Activated naive CD4-positive, alpha-beta T cell treated with anti-CD3 and anti-CD28 coated beads for 36 hours (primary cell): ENCODE measurements at regions of chr1 and their contacts with region 1.

Region 1: GRCh38 chr1:231612393-231613089 is 14.0 kb upstream of the DISC1 start:
- DNase-seq: peak; percentile 82
- H3K4me3 Mint-ChIP-seq: peak overlapping the region; percentile 41
- H3K27ac Mint-ChIP-seq: peak overlapping the region; percentile 83
- H3K4me1 Mint-ChIP-seq: peaks cover 46% of the 10 kb centered on the region
- H3K27me3 Mint-ChIP-seq: no peaks in the 10 kb centered on the region

Region 2: DNA sequence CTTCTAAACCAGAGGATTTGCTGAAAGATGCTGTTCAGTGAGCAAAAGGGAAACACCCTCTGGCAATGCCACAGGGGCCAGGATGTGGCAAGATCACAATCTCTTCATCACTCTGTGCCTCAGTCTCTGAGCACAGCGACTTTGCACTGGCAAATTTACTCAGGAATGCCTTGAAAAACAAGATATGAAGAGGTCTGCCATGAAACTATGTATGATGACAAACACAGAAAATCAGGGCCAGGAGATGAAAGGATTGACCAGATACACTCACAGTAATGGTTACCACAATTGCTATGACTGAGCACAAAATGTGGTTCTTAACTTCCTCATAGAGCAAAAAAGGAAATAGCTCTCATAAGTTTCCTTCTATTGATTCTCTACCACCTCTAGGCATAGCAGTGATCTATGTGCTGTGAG is 639.7 kb before region 1 on chr1:
- CTCF ChIA-PET with region 1: no interaction called
- intact Hi-C with region 1: loop called (anchors 5 kb)
- DNase-seq: peak; percentile 77
- H3K4me3 Mint-ChIP-seq: peak overlapping the region; percentile 46
- H3K27ac Mint-ChIP-seq: peak overlapping the region; percentile 87
- H3K4me1 Mint-ChIP-seq: peaks cover 58% of the 10 kb centered on the region
- H3K27me3 Mint-ChIP-seq: no peaks in the 10 kb centered on the region

Region 3: GRCh38 chr1:231357831-231358354 is 254.6 kb before region 1 on chr1:
- CTCF ChIA-PET with region 1: no interaction called
- intact Hi-C with region 1: no loop called
- DNase-seq: peak; percentile 45
- H3K4me3 Mint-ChIP-seq: no peak overlapping the region
- H3K27ac Mint-ChIP-seq: peak overlapping the region; percentile 16
- H3K4me1 Mint-ChIP-seq: peaks cover 4% of the 10 kb centered on the region
- H3K27me3 Mint-ChIP-seq: no peaks in the 10 kb centered on the region